ENCODE measurements at regions of chr3 and their contacts with region 1.

Region 1: DNA sequence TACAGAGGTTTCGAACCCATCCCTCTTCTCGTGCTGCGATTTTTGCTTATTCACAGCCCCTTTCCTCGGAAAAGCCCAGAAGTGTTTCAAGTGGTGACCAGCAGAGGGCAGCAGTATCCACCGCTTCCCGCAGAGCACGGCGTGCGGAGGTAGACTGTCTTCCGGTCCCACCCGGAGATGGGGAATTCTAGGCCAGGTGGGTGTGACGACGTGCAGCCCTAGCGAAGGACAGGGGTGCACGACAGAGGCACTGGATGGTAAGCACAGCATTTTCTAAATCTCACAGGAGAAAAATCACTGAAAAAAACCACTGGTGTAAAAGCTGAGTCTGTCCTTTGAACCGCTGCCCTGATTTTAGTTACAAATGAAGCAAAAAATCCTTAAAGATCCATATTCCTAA is 7.4 kb upstream of the PSMD6 start:
- DNase-seq: peak; percentile 77
- H3K4me3 ChIP-seq: peak overlapping the region; percentile 71
- H3K27ac ChIP-seq: no peak overlapping the region
- H3K4me1 ChIP-seq: peaks cover 14% of the 10 kb centered on the region
- H3K27me3 ChIP-seq: no peaks in the 10 kb centered on the region

Region 2: GRCh38 chr3:64267721-64268604 is 237.2 kb after region 1 on chr3:
- in situ Hi-C with region 1: loop called (anchors 25 kb)
- DNase-seq: peak; percentile 88
- H3K4me3 ChIP-seq: peak overlapping the region; percentile 91
- H3K27ac ChIP-seq: peak overlapping the region; percentile 82
- H3K4me1 ChIP-seq: peaks cover 22% of the 10 kb centered on the region
- H3K27me3 ChIP-seq: no peaks in the 10 kb centered on the region

Region 3: DNA sequence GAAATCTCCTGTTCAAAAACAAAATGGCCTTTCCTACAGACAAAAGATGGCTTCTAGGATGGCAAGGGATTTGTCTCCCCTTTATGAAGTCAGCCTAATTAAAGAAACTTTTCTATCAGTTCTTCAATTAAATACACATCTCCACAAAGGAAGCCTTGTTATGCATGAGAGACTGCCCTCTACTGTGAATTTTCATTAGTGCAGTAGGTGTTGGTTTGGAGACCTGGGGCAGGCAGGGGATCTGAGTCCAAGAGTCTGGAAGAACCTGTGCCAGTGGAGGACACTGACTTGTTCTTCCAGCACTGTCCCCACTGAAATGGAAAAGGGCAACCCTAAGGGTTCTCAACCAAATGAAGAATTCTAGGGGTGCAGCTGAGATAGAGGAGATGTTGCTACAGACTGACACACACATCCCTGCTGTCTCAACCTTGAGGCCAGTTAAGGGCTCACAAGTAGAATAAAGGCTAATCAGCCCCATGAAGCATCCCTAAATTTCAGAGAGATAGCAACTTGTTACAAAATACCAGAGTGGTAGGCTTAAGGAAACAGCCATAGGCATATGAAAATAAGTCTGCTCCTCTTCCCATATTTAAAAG is 368.6 kb after region 1 on chr3:
- in situ Hi-C with region 1: loop called (anchors 5 kb)
- DNase-seq: peak; percentile 78
- H3K4me3 ChIP-seq: no peak overlapping the region
- H3K27ac ChIP-seq: peak overlapping the region; percentile 12; the same call in 1 of the 2 replicates
- H3K4me1 ChIP-seq: peaks cover 7% of the 10 kb centered on the region; the same call in 1 of the 2 replicates
- H3K27me3 ChIP-seq: no peaks in the 10 kb centered on the region

Region 4: GRCh38 chr3:64484289-64484992 is 453.7 kb after region 1 on chr3:
- in situ Hi-C with region 1: loop called (anchors 5 kb)
- DNase-seq: peak; percentile 85
- H3K4me3 ChIP-seq: no peak overlapping the region
- H3K27ac ChIP-seq: no peak overlapping the region
- H3K4me1 ChIP-seq: no peaks in the 10 kb centered on the region
- H3K27me3 ChIP-seq: no peaks in the 10 kb centered on the region

Region 5: DNA sequence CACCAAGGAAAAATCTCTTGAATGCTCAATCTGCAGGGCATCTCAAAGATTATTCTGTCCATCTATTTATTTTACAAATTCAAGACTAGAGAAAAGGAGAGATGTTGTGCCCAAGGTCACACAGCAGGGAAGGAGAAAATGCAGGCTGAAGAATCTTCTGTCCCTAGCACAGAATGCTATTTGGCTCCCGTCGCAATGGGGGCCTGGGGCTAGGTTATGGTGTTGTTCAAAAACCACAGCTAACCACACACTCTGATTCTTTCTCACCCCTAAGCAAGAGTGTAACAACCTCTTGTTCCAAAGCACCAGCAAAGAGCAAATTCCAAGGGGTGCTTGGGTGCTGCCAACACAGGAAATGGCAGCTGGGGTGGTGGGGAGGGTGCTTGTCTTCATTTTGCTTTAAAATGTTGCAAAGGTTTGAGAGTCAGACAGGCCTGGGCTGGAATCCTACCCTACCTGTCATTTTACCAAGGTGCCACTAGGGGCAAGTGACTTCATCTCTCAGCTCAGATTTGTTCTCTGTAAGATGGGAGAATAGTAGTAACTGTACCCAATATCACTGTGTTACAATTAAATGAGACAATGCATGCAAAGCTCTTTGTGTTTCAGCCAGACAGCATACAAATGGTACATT is 544.6 kb after region 1 on chr3:
- in situ Hi-C with region 1: no loop called
- DNase-seq: peak; percentile 50
- H3K4me3 ChIP-seq: no peak overlapping the region
- H3K27ac ChIP-seq: no peak overlapping the region
- H3K4me1 ChIP-seq: no peaks in the 10 kb centered on the region
- H3K27me3 ChIP-seq: no peaks in the 10 kb centered on the region

Measured in GM23248 (cell line).